Activated naive CD8-positive, alpha-beta T cell treated with anti-CD3 and anti-CD28 coated beads, Interleukin-2, amount 10 ng/mL, durations not matched to agents 7 days and 5 days (primary cell): ENCODE measurements at regions of chr5 and their contacts with region 1.

Region 1: GRCh38 chr5:345404-346195 is 24.1 kb downstream of the AHRR start:
- DNase-seq: no peak
- ATAC-seq: peak; percentile 26
- H3K4me3 Mint-ChIP-seq: peak overlapping the region; percentile 82
- H3K27ac Mint-ChIP-seq: peak overlapping the region; percentile 88
- H3K4me1 Mint-ChIP-seq: peaks cover 44% of the 10 kb centered on the region
- H3K27me3 Mint-ChIP-seq: no peaks in the 10 kb centered on the region

Region 2: GRCh38 chr5:121432-121831 is 224.2 kb before region 1 on chr5:
- POLR2A ChIA-PET with region 1: no interaction called
- DNase-seq: no peak
- ATAC-seq: no peak
- H3K4me3 Mint-ChIP-seq: no peak overlapping the region
- H3K27ac Mint-ChIP-seq: no peak overlapping the region
- H3K4me1 Mint-ChIP-seq: no peaks in the 10 kb centered on the region
- H3K27me3 Mint-ChIP-seq: peaks cover 12% of the 10 kb centered on the region

Region 3: DNA sequence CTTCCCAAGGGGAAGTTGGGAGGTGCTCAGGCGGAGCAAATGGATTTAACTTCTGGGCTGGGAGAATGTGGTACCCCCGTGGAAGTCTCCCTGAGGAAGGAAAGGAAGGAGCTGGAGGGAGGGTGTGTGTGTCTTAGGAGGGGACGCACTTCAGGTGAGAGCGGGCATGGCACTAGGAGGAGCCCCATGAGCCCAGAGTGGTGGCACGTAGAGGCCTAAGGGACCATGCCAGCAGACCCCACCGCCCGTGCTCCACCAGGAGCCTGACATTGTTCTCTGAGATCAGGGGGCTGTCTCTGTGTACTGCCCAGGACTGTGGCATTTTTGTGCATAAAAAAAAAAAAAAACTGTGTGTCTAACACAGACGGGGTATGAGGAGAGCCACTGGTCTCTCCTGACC is 42.6 kb before region 1 on chr5:
- POLR2A ChIA-PET with region 1: no interaction called
- DNase-seq: no peak
- ATAC-seq: no peak
- H3K4me3 Mint-ChIP-seq: no peak overlapping the region
- H3K27ac Mint-ChIP-seq: no peak overlapping the region
- H3K4me1 Mint-ChIP-seq: peaks cover 9% of the 10 kb centered on the region
- H3K27me3 Mint-ChIP-seq: no peaks in the 10 kb centered on the region

Region 4: GRCh38 chr5:368183-369084 is 22.8 kb after region 1 on chr5:
- POLR2A ChIA-PET with region 1: interaction called, 12 read pairs
- DNase-seq: no peak
- ATAC-seq: no peak
- H3K4me3 Mint-ChIP-seq: peak overlapping the region; percentile 57
- H3K27ac Mint-ChIP-seq: peak overlapping the region; percentile 83
- H3K4me1 Mint-ChIP-seq: peaks cover 44% of the 10 kb centered on the region
- H3K27me3 Mint-ChIP-seq: no peaks in the 10 kb centered on the region

Region 5: GRCh38 chr5:373710-374602 is 28.4 kb after region 1 on chr5:
- POLR2A ChIA-PET with region 1: interaction called, 12 read pairs
- DNase-seq: peak; percentile 91
- ATAC-seq: peak; percentile 43
- H3K4me3 Mint-ChIP-seq: peak overlapping the region; percentile 70
- H3K27ac Mint-ChIP-seq: peak overlapping the region; percentile 90
- H3K4me1 Mint-ChIP-seq: peaks cover 63% of the 10 kb centered on the region
- H3K27me3 Mint-ChIP-seq: no peaks in the 10 kb centered on the region